Activated naive CD8-positive, alpha-beta T cell treated with anti-CD3 and anti-CD28 coated beads, Interleukin-2, amount 10 ng/mL, durations not matched to agents 7 days and 5 days (primary cell): ENCODE measurements at regions of chrX and their contacts with region 1.

Region 1: GRCh38 chrX:79146640-79147390 is 2.3 kb downstream of the GPR174 start:
- DNase-seq: no peak
- ATAC-seq: peak; percentile 46
- H3K4me3 Mint-ChIP-seq: peak overlapping the region; percentile 87
- H3K27ac Mint-ChIP-seq: peak overlapping the region; percentile 91
- H3K4me1 Mint-ChIP-seq: peaks cover 32% of the 10 kb centered on the region
- H3K27me3 Mint-ChIP-seq: no peaks in the 10 kb centered on the region

Region 2: GRCh38 chrX:79167462-79167861 is 20.6 kb after region 1 on chrX:
- POLR2A ChIA-PET with region 1: interaction called, 11 read pairs
- DNase-seq: no peak
- ATAC-seq: peak; percentile 38
- H3K4me3 Mint-ChIP-seq: peak overlapping the region; percentile 77
- H3K27ac Mint-ChIP-seq: peak overlapping the region; percentile 88
- H3K4me1 Mint-ChIP-seq: peaks cover 54% of the 10 kb centered on the region
- H3K27me3 Mint-ChIP-seq: no peaks in the 10 kb centered on the region

Region 3: DNA sequence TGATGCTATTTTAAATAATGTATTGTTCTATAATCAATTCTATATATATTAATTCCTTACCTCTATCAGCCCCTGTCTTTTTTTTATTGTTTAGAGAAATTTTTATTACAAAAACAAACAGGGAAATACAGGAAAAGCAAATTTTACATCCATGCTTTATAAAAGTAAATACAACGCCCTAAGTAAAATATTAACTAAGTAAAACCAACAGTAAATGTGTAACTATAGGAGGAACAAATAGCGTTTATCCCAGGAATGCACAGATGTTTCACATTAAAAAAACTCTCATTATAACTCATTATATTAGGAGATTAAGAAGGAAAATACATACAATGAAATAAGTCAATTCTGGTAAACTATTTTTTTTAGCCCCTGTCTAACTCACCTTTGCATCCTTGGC is 228.5 kb after region 1 on chrX:
- POLR2A ChIA-PET with region 1: no interaction called
- DNase-seq: no peak
- ATAC-seq: no peak
- H3K4me3 Mint-ChIP-seq: no peak overlapping the region
- H3K27ac Mint-ChIP-seq: no peak overlapping the region
- H3K4me1 Mint-ChIP-seq: peaks cover 5% of the 10 kb centered on the region
- H3K27me3 Mint-ChIP-seq: no peaks in the 10 kb centered on the region